WTC11 (cell line): ENCODE measurements at regions of chr9 and their contacts with region 1.

Region 1: GRCh38 chr9:38017149-38017884 is 51.7 kb downstream of the SHB start:
- DNase-seq: peak; percentile 85
- ATAC-seq: peak; percentile 88
- H3K4me3 Mint-ChIP-seq: peak overlapping the region; percentile 49
- H3K27ac Mint-ChIP-seq: peak overlapping the region; percentile 97
- H3K4me1 Mint-ChIP-seq: peaks cover 93% of the 10 kb centered on the region
- H3K27me3 Mint-ChIP-seq: no peaks in the 10 kb centered on the region; the same call in 1 of the 2 replicates
- CTCF ChIP-seq: no peak; the same call in 1 of the 2 replicates

Region 2: GRCh38 chr9:38053697-38054461 is 36.6 kb after region 1 on chr9:
- CTCF ChIA-PET with region 1: interaction called, 18 read pairs
- POLR2A ChIA-PET with region 1: no interaction called
- DNase-seq: no peak
- ATAC-seq: no peak
- H3K4me3 Mint-ChIP-seq: no peak overlapping the region
- H3K27ac Mint-ChIP-seq: no peak overlapping the region
- H3K4me1 Mint-ChIP-seq: peaks cover 67% of the 10 kb centered on the region
- H3K27me3 Mint-ChIP-seq: no peaks in the 10 kb centered on the region; the same call in 1 of the 2 replicates
- CTCF ChIP-seq: no peak

Region 3: GRCh38 chr9:38068866-38069629 is 51.7 kb after region 1 on chr9 and contains the start of gene SHB:
- CTCF ChIA-PET with region 1: interaction called, 42 read pairs
- POLR2A ChIA-PET with region 1: interaction called, 21 read pairs
- DNase-seq: peak; percentile 77
- ATAC-seq: peak; percentile 52
- H3K4me3 Mint-ChIP-seq: peak within 1 kb of the TSS; percentile 80
- H3K27ac Mint-ChIP-seq: peak within 1 kb of the TSS; percentile 37; the same call in 1 of the 2 replicates
- H3K4me1 Mint-ChIP-seq: peaks cover 45% of the 10 kb centered on the region
- H3K27me3 Mint-ChIP-seq: peaks cover 30% of the 10 kb centered on the region
- CTCF ChIP-seq: no peak
- total RNA-seq, gene SHB: 9.5 to 12.2 TPM (median 10.6 TPM) in 3 replicates

Region 4: GRCh38 chr9:38088006-38088925 is 70.9 kb after region 1 on chr9:
- CTCF ChIA-PET with region 1: interaction called, 61 read pairs
- POLR2A ChIA-PET with region 1: no interaction called
- DNase-seq: peak; percentile 90
- ATAC-seq: peak; percentile 88
- H3K4me3 Mint-ChIP-seq: no peak overlapping the region
- H3K27ac Mint-ChIP-seq: no peak overlapping the region
- H3K4me1 Mint-ChIP-seq: peaks cover 25% of the 10 kb centered on the region
- H3K27me3 Mint-ChIP-seq: no peaks in the 10 kb centered on the region; the same call in 1 of the 2 replicates
- CTCF ChIP-seq: peak; percentile 98